ENCODE measurements at regions of chr2 and their contacts with region 1.

Region 1: GRCh38 chr2:199602271-199602895 is 144.6 kb upstream of the SATB2 start:
- DNase-seq: peak; percentile 38
- H3K4me3 Mint-ChIP-seq: no peak overlapping the region
- H3K27ac Mint-ChIP-seq: no peak overlapping the region
- H3K4me1 Mint-ChIP-seq: no peaks in the 10 kb centered on the region
- H3K27me3 Mint-ChIP-seq: peaks cover 22% of the 10 kb centered on the region
- CTCF ChIP-seq: no peak

Region 2: DNA sequence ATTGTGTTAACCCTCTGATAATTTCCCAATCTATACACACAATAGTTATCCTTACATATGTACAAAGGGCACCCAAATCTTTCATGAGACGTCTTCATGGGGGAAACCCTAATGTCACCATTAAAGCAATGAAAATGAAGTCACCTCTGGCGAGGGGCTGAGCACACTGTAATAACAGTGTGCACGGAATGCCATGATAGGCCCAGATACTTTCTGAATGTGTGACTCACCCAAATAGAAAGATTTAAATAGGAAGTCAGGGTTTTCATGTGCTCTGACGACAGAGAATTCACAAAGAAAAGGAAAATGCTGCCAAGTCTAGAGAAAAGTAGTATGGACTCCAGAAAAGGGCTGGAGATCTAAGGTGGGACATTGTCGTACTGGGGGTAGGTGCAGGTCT is 272.9 kb before region 1 on chr2:
- CTCF ChIA-PET with region 1: no interaction called
- intact Hi-C with region 1: no loop called
- DNase-seq: no peak
- H3K4me3 Mint-ChIP-seq: no peak overlapping the region
- H3K27ac Mint-ChIP-seq: no peak overlapping the region
- H3K4me1 Mint-ChIP-seq: no peaks in the 10 kb centered on the region
- H3K27me3 Mint-ChIP-seq: no peaks in the 10 kb centered on the region
- CTCF ChIP-seq: no peak

Region 3: GRCh38 chr2:199739413-199740110 is 137.2 kb after region 1 on chr2:
- CTCF ChIA-PET with region 1: no interaction called
- intact Hi-C with region 1: loop called (anchors 2 kb)
- DNase-seq: peak; percentile 75
- H3K4me3 Mint-ChIP-seq: no peak overlapping the region
- H3K27ac Mint-ChIP-seq: no peak overlapping the region
- H3K4me1 Mint-ChIP-seq: peaks cover 16% of the 10 kb centered on the region
- H3K27me3 Mint-ChIP-seq: peaks cover 25% of the 10 kb centered on the region
- CTCF ChIP-seq: peak; percentile 94

Measured in Calu3 (cell line).